ENCODE measurements at regions of chr9 and their contacts with region 1.

Region 1: DNA sequence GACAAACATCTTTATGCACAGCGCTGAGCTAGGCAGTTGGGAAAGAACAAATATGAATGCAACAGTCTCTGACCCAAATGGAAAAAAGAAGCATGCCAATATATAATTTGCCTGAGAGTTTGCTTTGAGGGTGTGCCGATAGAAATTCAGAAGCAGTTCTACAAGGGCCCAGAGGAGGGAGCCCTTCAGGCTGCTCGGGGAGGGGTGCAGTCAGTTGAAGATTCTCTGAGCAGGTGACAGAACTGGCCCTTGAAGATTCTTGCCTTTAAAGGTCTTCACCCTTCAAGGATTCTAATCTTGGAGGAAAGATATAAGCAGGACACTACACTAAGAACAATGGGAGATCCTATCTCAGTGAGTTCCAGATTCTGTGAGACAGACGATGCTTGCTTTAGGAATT is 3.7 kb upstream of the PAPPA start:
- DNase-seq: peak; percentile 14
- H3K4me3 ChIP-seq: no peak overlapping the region
- H3K27ac ChIP-seq: no peak overlapping the region
- H3K4me1 ChIP-seq: no peaks in the 10 kb centered on the region
- CTCF ChIP-seq: peak; percentile 71

Region 2: GRCh38 chr9:116572095-116572748 is 422.4 kb after region 1 on chr9:
- CTCF ChIA-PET with region 1: no interaction called
- POLR2A ChIA-PET with region 1: no interaction called
- intact Hi-C with region 1: loop called (anchors 5 kb)
- DNase-seq: peak; percentile 33
- H3K4me3 ChIP-seq: no peak overlapping the region
- H3K27ac ChIP-seq: no peak overlapping the region
- H3K4me1 ChIP-seq: no peaks in the 10 kb centered on the region
- CTCF ChIP-seq: peak; percentile 80